ENCODE measurements at regions of chr10 and their contacts with region 1.

Region 1: GRCh38 chr10:14571866-14572507 is 202.7 kb downstream of the FAM107B start:
- DNase-seq: peak in 8 of 9 donors; percentile 47 to 94 (median 90)
- ATAC-seq: peak; percentile 80
- H3K4me3 ChIP-seq: peak overlapping the region; percentile 67
- H3K4me3 Mint-ChIP-seq: peak overlapping the region; percentile 86 to 98 (median 96)
- H3K27ac ChIP-seq: peak overlapping the region; percentile 87
- H3K27ac Mint-ChIP-seq: peak overlapping the region; percentile 93 to 100 (median 99)
- H3K4me1 ChIP-seq: peaks cover 40 to 53% of the 10 kb centered on the region in 2 donors
- H3K4me1 Mint-ChIP-seq: peaks cover 42 to 88% (median 79%) of the 10 kb centered on the region in 7 donors
- H3K27me3 ChIP-seq: no peaks in the 10 kb centered on the region
- H3K27me3 Mint-ChIP-seq: no peaks in the 10 kb centered on the region

Region 2: DNA sequence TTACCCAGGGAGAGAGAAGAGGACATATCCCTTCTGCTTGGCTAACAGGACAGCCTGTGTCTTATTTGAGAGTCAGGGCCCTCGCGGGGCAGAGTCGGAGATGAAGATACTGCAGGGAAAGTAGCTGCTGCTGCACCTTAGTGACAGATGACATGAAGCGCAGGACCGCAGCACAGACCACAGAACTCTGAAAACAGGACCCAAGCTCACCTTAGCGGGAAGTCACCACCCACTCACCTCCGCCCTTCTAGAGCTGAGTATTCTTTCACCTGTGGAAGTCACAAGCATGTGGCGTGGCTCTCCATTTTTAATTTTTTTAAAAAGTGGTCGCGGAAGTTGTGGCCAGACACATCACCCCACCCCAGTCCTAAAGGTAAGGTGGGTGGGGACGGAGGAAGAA is 11.3 kb after region 1 on chr10:
- CTCF ChIA-PET with region 1: interaction called, 17 read pairs
- POLR2A ChIA-PET with region 1: interaction called, 429 read pairs
- intact Hi-C with region 1: loop called (anchors 1 kb)
- DNase-seq: peak; percentile 47 to 92 (median 87)
- ATAC-seq: peak; percentile 79
- H3K4me3 ChIP-seq: peak overlapping the region; percentile 10
- H3K4me3 Mint-ChIP-seq: peak overlapping the region; percentile 76 to 90 (median 82)
- H3K27ac ChIP-seq: peak overlapping the region; percentile 83
- H3K27ac Mint-ChIP-seq: peak overlapping the region; percentile 96 to 100 (median 99)
- H3K4me1 ChIP-seq: peaks cover 75 to 77% of the 10 kb centered on the region in 2 donors
- H3K4me1 Mint-ChIP-seq: peaks cover 69 to 99% (median 92%) of the 10 kb centered on the region in 7 donors
- H3K27me3 ChIP-seq: no peaks in the 10 kb centered on the region
- H3K27me3 Mint-ChIP-seq: no peaks in the 10 kb centered on the region

Region 3: DNA sequence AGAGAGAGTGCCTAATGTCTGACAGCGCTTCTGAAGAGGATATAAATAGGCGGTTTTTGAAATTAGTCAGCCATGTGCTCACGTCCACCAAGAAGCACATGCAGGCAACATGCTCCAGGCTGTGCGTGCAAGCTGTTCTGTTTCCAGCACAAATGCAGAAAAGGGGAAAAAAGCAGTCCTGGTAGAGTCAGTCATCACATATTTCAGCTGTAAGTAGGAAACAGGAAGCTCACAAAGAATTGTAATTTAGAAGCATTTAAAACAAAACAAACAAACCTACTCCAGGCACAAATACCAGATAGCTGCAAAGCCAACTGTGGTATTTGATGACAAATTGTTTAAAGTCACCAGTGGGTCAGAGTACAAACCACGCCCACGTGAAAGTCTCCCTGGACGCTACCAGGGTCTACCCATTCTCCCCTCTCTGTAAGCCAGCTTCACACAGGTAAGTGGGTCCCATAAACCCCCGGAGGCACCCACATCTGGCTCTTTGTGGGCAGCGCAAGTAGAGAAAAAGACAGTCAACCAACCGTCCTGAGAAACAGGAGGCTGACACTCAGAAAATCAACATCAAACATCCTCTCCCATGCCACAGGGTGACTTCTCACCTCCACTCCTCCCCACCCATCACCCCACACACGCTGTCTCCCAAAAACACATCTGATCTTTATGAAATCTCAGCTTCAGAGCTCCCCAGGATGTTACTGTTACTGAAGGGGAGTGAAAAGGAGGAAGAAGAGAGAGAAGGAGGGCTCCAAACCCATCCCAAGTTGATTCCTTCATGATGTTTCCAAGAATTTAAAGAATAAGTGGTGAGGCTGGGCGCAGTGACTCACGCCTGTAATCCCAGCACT is 16.3 kb after region 1 on chr10:
- CTCF ChIA-PET with region 1: interaction called, 17 read pairs
- POLR2A ChIA-PET with region 1: interaction called, 429 read pairs
- intact Hi-C with region 1: loop called (anchors 1 kb)
- DNase-seq: peak in 6 of 9 donors; percentile 24 to 60 (median 44)
- ATAC-seq: peak; percentile 20
- H3K4me3 ChIP-seq: peak overlapping the region; percentile 31
- H3K4me3 Mint-ChIP-seq: peak overlapping the region; percentile 76 to 88 (median 84)
- H3K27ac ChIP-seq: peak overlapping the region; percentile 83
- H3K27ac Mint-ChIP-seq: peak overlapping the region; percentile 96 to 100 (median 99)
- H3K4me1 ChIP-seq: peaks cover 73 to 76% of the 10 kb centered on the region in 2 donors
- H3K4me1 Mint-ChIP-seq: peaks cover 52 to 94% (median 93%) of the 10 kb centered on the region in 7 donors
- H3K27me3 ChIP-seq: no peaks in the 10 kb centered on the region
- H3K27me3 Mint-ChIP-seq: no peaks in the 10 kb centered on the region

Region 4: DNA sequence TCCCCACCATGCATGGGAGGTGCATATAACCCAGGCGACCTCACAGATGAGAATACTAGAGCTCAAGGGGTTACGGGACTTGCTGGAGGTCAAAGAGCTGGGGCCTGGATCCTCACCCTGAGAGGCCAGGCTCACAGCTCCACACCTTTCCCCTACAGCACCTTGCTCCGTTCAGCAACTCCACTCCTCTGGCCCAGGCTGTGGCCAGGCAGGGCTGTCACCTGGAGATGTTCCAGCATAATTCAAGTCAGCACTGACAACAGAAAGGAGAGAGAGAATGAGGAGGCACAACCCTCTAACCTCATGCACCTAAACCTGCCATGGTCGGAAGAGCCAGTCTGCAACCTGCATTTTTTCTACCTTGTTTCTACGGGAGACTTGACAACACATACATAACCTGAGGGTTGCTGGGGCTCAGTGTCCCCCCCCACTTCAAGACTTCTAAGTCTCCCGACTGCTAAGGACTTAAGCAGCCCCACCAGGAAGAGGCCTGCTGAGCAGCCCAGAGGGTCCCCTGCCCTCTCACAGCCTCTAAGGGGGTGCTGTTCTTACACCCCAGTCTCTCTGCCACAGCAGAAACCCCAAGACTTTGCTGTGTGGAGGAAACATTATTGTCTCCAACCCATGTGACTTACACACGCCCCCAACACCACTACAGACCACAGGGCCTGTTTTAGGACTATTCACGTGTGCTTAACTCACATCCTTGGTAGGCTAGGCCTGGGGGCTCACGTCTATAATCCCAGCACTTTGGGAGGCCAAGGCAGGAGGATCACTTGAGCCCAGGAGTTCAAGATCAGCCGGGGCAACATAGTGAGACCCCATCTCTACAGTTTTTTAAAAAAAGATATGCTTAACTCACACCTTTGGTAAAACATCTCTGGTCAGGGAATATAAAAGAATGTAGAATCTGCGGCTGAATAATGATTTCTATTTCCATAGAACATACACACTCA is 27.1 kb after region 1 on chr10:
- CTCF ChIA-PET with region 1: interaction called, 3 read pairs
- POLR2A ChIA-PET with region 1: interaction called, 429 read pairs
- intact Hi-C with region 1: loop called (anchors 1 kb)
- DNase-seq: no peak
- ATAC-seq: peak; percentile 13
- H3K4me3 ChIP-seq: no peak overlapping the region
- H3K4me3 Mint-ChIP-seq: peak overlapping the region in 5 of 10 donors; percentile 25 to 94 (median 34)
- H3K27ac ChIP-seq: peak overlapping the region; percentile 31
- H3K27ac Mint-ChIP-seq: peak overlapping the region; percentile 33 to 91 (median 73)
- H3K4me1 ChIP-seq: peaks cover 18 to 42% of the 10 kb centered on the region in 2 donors
- H3K4me1 Mint-ChIP-seq: peaks cover 64 to 92% (median 88%) of the 10 kb centered on the region in 7 donors
- H3K27me3 ChIP-seq: no peaks in the 10 kb centered on the region
- H3K27me3 Mint-ChIP-seq: peaks cover 0 to 2% (median 0%) of the 10 kb centered on the region in 5 donors

Region 5: DNA sequence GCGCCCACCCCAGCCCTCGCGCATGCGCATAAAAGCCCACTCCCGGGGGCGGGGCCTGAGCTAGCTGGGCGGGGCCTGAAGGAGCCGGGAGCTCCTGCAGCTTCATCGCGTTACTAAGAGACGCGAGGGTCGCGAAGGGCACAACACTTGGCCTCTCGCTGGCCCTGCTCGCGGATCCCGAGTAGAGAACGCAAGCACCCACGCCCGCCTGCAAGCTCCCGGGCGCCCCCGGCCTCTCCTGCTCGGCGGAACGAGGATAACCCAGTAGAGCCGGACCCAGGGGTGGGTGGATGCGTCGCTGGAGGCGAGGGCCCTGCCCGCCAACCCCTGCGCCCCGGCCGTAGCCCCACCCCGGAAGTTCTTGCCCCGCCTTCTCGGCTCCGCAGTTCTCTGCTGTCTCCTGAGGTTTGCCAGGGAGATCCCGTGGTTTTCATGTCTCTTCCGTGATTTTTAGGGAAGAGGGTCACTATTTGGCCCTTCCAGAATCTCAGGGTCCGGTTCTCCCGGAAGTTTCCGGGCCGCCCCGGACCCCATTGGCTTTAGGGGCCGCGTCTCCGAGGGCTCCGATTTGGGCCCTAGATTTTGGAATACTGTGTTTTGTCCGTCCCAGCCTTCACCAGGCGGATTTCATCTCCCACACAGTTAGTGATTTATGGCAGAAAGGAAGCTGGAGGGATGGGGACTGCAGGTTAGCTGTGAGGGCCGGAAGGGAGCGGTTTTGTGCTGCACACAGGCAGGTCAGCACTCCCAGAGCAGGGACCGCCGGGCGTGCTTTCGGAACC is 387.5 kb after region 1 on chr10 and contains the start of gene MEIG1:
- CTCF ChIA-PET with region 1: no interaction called
- POLR2A ChIA-PET with region 1: no interaction called
- intact Hi-C with region 1: loop called in 1 of 2 experiments (anchors 10 kb)
- DNase-seq: peak; percentile 82 to 99 (median 90)
- ATAC-seq: peak; percentile 93
- H3K4me3 ChIP-seq: peak within 1 kb of the TSS; percentile 97
- H3K4me3 Mint-ChIP-seq: peak within 1 kb of the TSS; percentile 91 to 99 (median 96)
- H3K27ac ChIP-seq: peak within 1 kb of the TSS; percentile 81
- H3K27ac Mint-ChIP-seq: peak within 1 kb of the TSS; percentile 93 to 98 (median 96)
- H3K4me1 ChIP-seq: peaks cover 8 to 10% of the 10 kb centered on the region in 2 donors
- H3K4me1 Mint-ChIP-seq: peaks cover 6 to 42% (median 34%) of the 10 kb centered on the region in 7 donors
- H3K27me3 ChIP-seq: no peaks in the 10 kb centered on the region
- H3K27me3 Mint-ChIP-seq: no peaks in the 10 kb centered on the region
- total RNA-seq, gene MEIG1: 1.2 to 1.9 TPM in 2 of 5 experiments, not detected in the others